Activated CD8-positive, alpha-beta T cell treated with anti-CD3 and anti-CD28 coated beads, Interleukin-2, amount 10 ng/mL, durations not matched to agents 7 days and 5 days (primary cell): ENCODE measurements at regions of chr20 and their contacts with region 1.

Region 1: GRCh38 chr20:54103067-54103761 is 32.8 kb upstream of the BCAS1 start:
- DNase-seq: peak; percentile 83
- ATAC-seq: peak; percentile 87
- H3K4me3 Mint-ChIP-seq: no peak overlapping the region
- H3K27ac Mint-ChIP-seq: no peak overlapping the region
- H3K4me1 Mint-ChIP-seq: peaks cover 1% of the 10 kb centered on the region
- H3K27me3 Mint-ChIP-seq: peaks cover 26% of the 10 kb centered on the region

Region 2: DNA sequence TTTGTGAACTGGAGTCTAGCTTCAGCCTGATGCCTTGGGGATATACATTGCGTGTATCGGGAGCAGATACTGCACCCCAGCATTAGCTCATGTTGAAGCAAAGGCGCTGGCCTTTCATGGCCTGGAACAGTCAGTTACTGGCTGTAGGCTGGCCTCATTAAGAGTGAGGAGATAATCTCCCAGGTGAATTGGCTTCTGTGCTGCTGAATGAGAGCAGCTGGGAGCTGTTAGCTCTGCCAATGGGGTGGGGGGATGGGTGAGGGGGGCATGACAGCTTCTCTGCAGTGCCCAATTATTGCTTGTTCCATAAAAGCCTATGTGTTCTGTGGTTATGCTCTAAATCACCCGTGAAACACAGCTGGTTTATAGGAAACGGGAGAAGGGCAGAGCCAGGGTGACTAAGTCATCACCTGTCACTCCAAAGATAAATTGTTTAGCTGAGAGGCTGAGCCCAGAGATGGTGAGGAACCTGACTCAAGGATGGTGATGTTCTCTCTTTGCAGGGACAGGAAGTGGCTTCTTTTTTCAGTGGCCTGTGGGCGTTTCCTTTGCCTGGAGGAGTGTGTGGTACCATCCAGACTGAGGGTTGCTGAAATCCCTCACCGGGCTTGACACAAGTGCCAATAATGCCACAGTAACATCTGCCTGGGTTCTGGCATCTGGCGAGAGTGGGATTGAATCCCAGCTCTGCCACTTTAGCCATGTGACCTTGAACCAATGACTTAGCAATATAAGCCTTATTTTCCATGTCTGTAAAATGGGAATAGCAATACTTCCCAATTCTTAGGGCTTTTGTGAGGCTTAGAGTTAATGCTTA is 203.7 kb before region 1 on chr20:
- CTCF ChIA-PET with region 1: no interaction called
- POLR2A ChIA-PET with region 1: no interaction called
- DNase-seq: peak; percentile 89
- ATAC-seq: peak; percentile 95
- H3K4me3 Mint-ChIP-seq: peak overlapping the region; percentile 35
- H3K27ac Mint-ChIP-seq: peak overlapping the region; percentile 92
- H3K4me1 Mint-ChIP-seq: peaks cover 79% of the 10 kb centered on the region
- H3K27me3 Mint-ChIP-seq: no peaks in the 10 kb centered on the region

Region 3: GRCh38 chr20:54056762-54057639 is 46.2 kb before region 1 on chr20:
- CTCF ChIA-PET with region 1: interaction called, 12 read pairs
- POLR2A ChIA-PET with region 1: no interaction called
- DNase-seq: no peak
- ATAC-seq: no peak
- H3K4me3 Mint-ChIP-seq: no peak overlapping the region
- H3K27ac Mint-ChIP-seq: no peak overlapping the region
- H3K4me1 Mint-ChIP-seq: no peaks in the 10 kb centered on the region
- H3K27me3 Mint-ChIP-seq: peaks cover 5% of the 10 kb centered on the region

Region 4: DNA sequence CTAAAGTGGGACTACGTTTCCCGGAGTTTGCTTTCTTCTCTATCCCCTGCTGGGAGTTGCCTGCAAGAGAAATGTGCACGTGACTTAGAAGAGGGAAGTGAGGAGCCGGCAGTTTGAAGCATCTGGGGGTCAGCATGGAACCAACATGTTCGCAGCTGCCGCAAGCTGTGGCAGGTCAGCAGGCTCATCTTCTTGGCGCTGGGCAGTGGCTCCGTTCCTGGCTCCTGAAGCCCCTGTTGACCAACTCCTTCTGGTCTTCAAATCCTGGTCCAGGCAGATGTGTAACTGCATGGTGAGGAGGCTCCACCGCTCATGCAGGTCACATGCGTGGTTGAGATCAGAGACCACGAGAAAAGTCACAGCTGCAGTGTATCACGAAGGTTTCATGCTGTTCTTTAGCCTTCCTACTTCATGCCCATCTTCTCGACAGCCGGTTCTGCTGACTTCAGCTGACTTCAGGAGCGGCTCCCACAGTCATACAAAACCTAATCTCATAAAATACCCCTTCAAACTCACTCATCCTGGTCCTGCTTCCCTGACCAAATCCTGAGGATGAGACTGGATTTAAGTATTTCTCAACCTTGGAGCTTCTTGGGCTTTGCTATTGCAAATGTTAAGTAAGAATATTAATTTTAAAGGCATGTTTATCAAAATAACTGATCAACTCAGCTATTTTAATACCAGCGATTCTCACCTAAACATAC is 12.1 kb after region 1 on chr20:
- CTCF ChIA-PET with region 1: interaction called, 13 read pairs
- POLR2A ChIA-PET with region 1: no interaction called
- DNase-seq: no peak
- ATAC-seq: no peak
- H3K4me3 Mint-ChIP-seq: no peak overlapping the region
- H3K27ac Mint-ChIP-seq: no peak overlapping the region
- H3K4me1 Mint-ChIP-seq: no peaks in the 10 kb centered on the region
- H3K27me3 Mint-ChIP-seq: no peaks in the 10 kb centered on the region

Region 5: DNA sequence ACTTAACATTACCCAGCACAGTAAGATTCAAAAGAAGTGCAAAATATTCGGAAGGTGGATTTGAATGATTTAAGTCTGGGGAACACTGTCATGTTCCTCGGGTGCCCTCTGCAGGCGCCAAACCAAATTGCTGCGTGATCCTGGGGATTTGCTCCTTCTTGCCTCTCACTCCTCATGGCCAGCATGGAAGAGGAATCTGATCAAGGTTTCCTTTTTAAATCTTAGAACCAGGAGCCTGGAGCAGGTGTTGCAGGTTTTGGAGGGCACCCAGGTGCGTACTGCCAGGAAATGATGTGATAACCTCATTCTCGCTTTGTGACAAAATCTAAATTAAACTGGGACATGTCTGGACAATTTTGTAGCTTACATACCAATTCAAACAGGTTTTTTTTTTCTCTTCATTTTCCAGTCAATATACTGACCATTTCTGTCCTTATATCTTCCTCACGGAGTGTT is 96.5 kb after region 1 on chr20:
- CTCF ChIA-PET with region 1: interaction called, 91 read pairs
- POLR2A ChIA-PET with region 1: no interaction called
- DNase-seq: peak; percentile 77
- ATAC-seq: peak; percentile 55
- H3K4me3 Mint-ChIP-seq: no peak overlapping the region
- H3K27ac Mint-ChIP-seq: no peak overlapping the region
- H3K4me1 Mint-ChIP-seq: no peaks in the 10 kb centered on the region
- H3K27me3 Mint-ChIP-seq: peaks cover 12% of the 10 kb centered on the region

Region 6: DNA sequence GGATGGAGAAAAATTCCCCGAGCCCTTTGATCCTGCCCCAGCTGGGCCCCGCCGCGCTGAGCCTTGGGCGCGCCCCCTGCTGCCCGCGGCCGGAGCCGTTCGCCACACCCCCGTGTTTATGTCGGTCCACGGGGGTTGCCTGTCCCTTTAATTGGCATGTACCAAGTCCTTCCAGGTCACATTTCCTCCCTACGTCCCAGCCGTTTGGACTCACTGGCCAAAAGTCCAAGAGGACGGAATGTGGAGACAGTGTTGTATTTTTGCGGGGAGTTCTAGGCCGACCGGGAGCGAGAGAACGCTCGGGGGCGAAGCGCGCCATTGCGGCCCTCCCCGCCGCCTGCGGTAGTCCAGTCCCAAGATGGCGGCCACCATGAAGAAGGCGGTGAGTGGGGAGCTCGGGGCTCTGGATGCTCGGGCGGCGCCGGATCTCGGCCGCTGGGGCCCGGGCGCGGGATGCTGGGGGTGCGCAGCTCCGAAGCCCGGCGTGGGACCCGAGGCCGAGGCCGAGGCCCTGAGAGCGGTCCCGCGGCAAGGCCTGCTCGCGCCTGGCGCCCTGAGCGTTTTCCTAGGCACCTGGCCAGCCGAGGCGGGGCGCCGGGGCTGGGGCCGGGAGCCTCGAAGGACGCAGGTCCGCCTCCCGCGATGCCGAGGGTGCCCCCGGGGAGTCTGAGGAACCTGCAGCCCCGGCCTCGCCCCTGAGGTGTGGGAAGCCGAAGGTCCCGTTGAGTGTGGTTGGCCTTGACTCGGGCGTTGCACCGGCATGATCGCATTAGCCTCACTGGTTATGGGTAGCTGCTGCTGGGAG is 104.7 kb after region 1 on chr20 and contains the start of gene PFDN4:
- CTCF ChIA-PET with region 1: interaction called, 28 read pairs
- POLR2A ChIA-PET with region 1: no interaction called
- DNase-seq: peak; percentile 84
- ATAC-seq: peak; percentile 95
- H3K4me3 Mint-ChIP-seq: peak within 1 kb of the TSS; percentile 93
- H3K27ac Mint-ChIP-seq: peak within 1 kb of the TSS; percentile 100
- H3K4me1 Mint-ChIP-seq: peaks cover 19% of the 10 kb centered on the region
- H3K27me3 Mint-ChIP-seq: peaks cover 5% of the 10 kb centered on the region
- total RNA-seq, gene PFDN4: 22.2 to 24.5 TPM

Region 7: GRCh38 chr20:54645451-54646155 is 542.4 kb after region 1 on chr20:
- CTCF ChIA-PET with region 1: interaction called, 15 read pairs
- POLR2A ChIA-PET with region 1: no interaction called
- DNase-seq: no peak
- ATAC-seq: no peak
- H3K4me3 Mint-ChIP-seq: no peak overlapping the region
- H3K27ac Mint-ChIP-seq: no peak overlapping the region
- H3K4me1 Mint-ChIP-seq: no peaks in the 10 kb centered on the region
- H3K27me3 Mint-ChIP-seq: no peaks in the 10 kb centered on the region